Activated CD8-positive, alpha-beta T cell treated with anti-CD3 and anti-CD28 coated beads for 36 hours (primary cell): ENCODE measurements at regions of chr18 and their contacts with region 1.

Region 1: GRCh38 chr18:59249205-59249774 is 24.0 kb downstream of the RAX start:
- DNase-seq: peak; percentile 57
- ATAC-seq: peak; percentile 49
- H3K4me3 Mint-ChIP-seq: no peak overlapping the region
- H3K27ac Mint-ChIP-seq: no peak overlapping the region
- H3K4me1 Mint-ChIP-seq: no peaks in the 10 kb centered on the region
- H3K27me3 Mint-ChIP-seq: peaks cover 35% of the 10 kb centered on the region
- CTCF ChIP-seq: peak; percentile 63

Region 2: GRCh38 chr18:59268721-59269562 is 19.7 kb after region 1 on chr18:
- CTCF ChIA-PET with region 1: interaction called, 12 read pairs
- POLR2A ChIA-PET with region 1: no interaction called
- intact Hi-C with region 1: no loop called
- DNase-seq: peak; percentile 74
- ATAC-seq: peak; percentile 83
- H3K4me3 Mint-ChIP-seq: no peak overlapping the region
- H3K27ac Mint-ChIP-seq: no peak overlapping the region
- H3K4me1 Mint-ChIP-seq: peaks cover 23% of the 10 kb centered on the region
- H3K27me3 Mint-ChIP-seq: peaks cover 81% of the 10 kb centered on the region
- CTCF ChIP-seq: no peak

Region 3: GRCh38 chr18:59300676-59301285 is 51.5 kb after region 1 on chr18:
- CTCF ChIA-PET with region 1: interaction called, 13 read pairs
- POLR2A ChIA-PET with region 1: no interaction called
- intact Hi-C with region 1: loop called (anchors 5 kb)
- DNase-seq: peak; percentile 28
- ATAC-seq: peak; percentile 98
- H3K4me3 Mint-ChIP-seq: no peak overlapping the region
- H3K27ac Mint-ChIP-seq: no peak overlapping the region
- H3K4me1 Mint-ChIP-seq: peaks cover 3% of the 10 kb centered on the region
- H3K27me3 Mint-ChIP-seq: peaks cover 13% of the 10 kb centered on the region
- CTCF ChIP-seq: no peak

Region 4: DNA sequence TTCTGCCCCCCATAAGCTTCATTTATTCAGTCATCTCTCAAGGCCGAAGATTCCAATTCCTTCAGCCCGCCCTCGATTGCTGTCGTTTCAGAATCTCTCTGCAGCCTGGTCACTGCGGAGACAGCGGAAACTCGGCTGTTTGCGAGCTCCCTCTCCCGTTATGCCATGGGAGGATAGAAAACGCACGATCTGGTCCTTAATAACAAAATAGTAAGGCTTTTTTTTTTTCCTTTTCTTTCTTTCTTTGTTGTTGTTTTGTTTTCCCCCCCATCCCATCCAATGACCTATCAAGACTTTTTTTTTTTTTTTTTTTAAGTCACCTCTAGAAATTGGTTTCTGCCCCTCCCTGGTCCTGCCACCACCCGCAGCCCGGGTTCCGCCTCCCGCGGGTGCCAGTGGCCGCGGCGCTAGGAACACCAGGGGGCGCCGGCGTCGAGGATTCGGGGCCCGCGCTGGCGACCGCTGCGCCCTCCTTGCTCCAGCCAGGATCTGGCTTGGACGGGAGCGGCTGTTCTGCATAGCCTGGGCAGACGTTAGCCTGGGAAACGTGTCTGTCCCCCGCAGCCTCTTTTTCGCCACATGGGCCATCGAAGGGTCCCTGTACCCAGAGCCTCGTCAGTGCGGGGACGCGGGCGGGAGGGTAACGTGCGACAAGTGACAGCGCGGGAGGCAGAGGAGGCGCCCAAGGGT is 59.1 kb after region 1 on chr18:
- CTCF ChIA-PET with region 1: interaction called, 13 read pairs
- POLR2A ChIA-PET with region 1: no interaction called
- intact Hi-C with region 1: loop called (anchors 5 kb)
- DNase-seq: peak; percentile 71
- ATAC-seq: peak; percentile 91
- H3K4me3 Mint-ChIP-seq: peak overlapping the region; percentile 36
- H3K27ac Mint-ChIP-seq: no peak overlapping the region
- H3K4me1 Mint-ChIP-seq: no peaks in the 10 kb centered on the region
- H3K27me3 Mint-ChIP-seq: peaks cover 33% of the 10 kb centered on the region
- CTCF ChIP-seq: peak; percentile 83